Endothelial cell of umbilical vein (primary cell): ENCODE measurements at regions of chr16 and their contacts with region 1.

Region 1: GRCh38 chr16:14545346-14545884 is 84.6 kb downstream of the PARN start:
- DNase-seq: no peak
- H3K4me3 ChIP-seq: no peak overlapping the region
- H3K27ac ChIP-seq: no peak overlapping the region
- H3K4me1 ChIP-seq: peaks cover 12% of the 10 kb centered on the region
- H3K27me3 ChIP-seq: no peaks in the 10 kb centered on the region
- CTCF ChIP-seq: no peak
- POLR2A ChIP-seq: no peak

Region 2: DNA sequence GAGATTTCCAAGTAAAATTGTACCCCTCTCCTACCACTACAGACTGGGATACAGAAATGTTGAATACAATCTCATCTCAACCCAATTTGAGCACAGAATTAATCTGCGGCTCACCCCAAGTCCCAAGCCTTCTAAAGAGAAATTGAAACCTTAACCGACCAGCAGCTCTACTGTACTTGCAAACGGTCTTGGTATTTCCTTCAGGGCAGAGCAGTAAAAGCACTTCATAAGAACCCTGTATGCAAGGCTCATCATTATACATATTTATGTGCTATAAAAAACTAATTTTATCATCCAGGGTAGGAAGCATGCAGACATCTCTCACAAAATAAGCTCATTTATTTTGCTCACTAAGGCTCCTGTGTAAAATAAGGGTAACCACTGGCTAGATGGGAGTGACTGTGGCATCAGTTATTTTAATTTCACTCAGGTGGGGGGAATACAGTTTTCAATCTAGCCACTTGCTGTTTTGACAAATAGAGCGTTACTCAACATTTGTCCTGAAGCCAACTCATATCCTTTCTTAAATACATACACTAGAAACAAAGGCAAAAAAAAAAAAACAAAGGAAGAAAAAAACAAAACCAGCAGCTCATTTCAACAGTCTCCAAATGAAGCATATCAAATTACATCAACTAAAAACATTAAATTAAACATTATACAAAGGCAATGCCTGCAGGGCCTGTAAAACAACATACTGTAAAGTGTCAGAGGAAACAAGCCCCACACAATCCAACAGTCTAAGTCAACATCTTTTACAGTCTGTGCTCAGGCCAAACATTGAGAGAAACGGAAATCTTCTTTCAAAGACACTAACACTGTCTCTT is 19.7 kb after region 1 on chr16:
- CTCF ChIA-PET with region 1: interaction called, 5 read pairs
- POLR2A ChIA-PET with region 1: no interaction called
- dilution Hi-C with region 1: no loop called
- intact Hi-C with region 1: loop called (anchors 2 kb)
- DNase-seq: peak; percentile 87
- H3K4me3 ChIP-seq: peak overlapping the region in 1 of 3 experiments; percentile 4
- H3K27ac ChIP-seq: peak overlapping the region; percentile 41
- H3K4me1 ChIP-seq: peaks cover 17% of the 10 kb centered on the region
- H3K27me3 ChIP-seq: no peaks in the 10 kb centered on the region
- CTCF ChIP-seq: no peak
- POLR2A ChIP-seq: no peak